ENCODE measurements at regions of chr17 and their contacts with region 1.

Region 1: GRCh38 chr17:57084802-57085447 is at the start of gene AKAP1:
- DNase-seq: peak; percentile 87 to 99 (median 94)
- ATAC-seq: peak; percentile 88
- H3K4me3 ChIP-seq: peak within 1 kb of the TSS; percentile 89
- H3K4me3 Mint-ChIP-seq: peak within 1 kb of the TSS; percentile 95
- H3K27ac ChIP-seq: peak within 1 kb of the TSS; percentile 84 to 85
- H3K27ac Mint-ChIP-seq: peak within 1 kb of the TSS; percentile 89
- H3K4me1 ChIP-seq: peaks cover 20% of the 10 kb centered on the region
- H3K4me1 Mint-ChIP-seq: peaks cover 36% of the 10 kb centered on the region
- H3K27me3 ChIP-seq: no peaks in the 10 kb centered on the region
- H3K27me3 Mint-ChIP-seq: no peaks in the 10 kb centered on the region
- CTCF ChIP-seq: no peak
- total RNA-seq, gene AKAP1: 20.3 to 23.1 TPM

Region 2: GRCh38 chr17:56833809-56834379 is 251.0 kb before region 1 on chr17 and contains the starts of genes C17orf67 and DGKE:
- CTCF ChIA-PET with region 1: interaction called, 3 read pairs
- POLR2A ChIA-PET with region 1: interaction called, 24 read pairs
- intact Hi-C with region 1: loop called (anchors 1 to 2 kb)
- DNase-seq: peak; percentile 97 to 100 (median 99)
- ATAC-seq: peak; percentile 87
- H3K4me3 ChIP-seq: peak within 1 kb of the TSS; percentile 96
- H3K4me3 Mint-ChIP-seq: peak within 1 kb of the TSS; percentile 99
- H3K27ac ChIP-seq: peak within 1 kb of the TSS; percentile 58 to 83
- H3K27ac Mint-ChIP-seq: peak within 1 kb of the TSS; percentile 95
- H3K4me1 ChIP-seq: peaks cover 41% of the 10 kb centered on the region
- H3K4me1 Mint-ChIP-seq: peaks cover 67% of the 10 kb centered on the region
- H3K27me3 ChIP-seq: no peaks in the 10 kb centered on the region
- H3K27me3 Mint-ChIP-seq: no peaks in the 10 kb centered on the region
- CTCF ChIP-seq: no peak
- total RNA-seq, gene C17orf67: 4.3 to 4.8 TPM
- total RNA-seq, gene DGKE: 20.0 to 22.3 TPM

Region 3: GRCh38 chr17:56977673-56978395 is 107.1 kb before region 1 on chr17 and contains the start of gene SCPEP1:
- CTCF ChIA-PET with region 1: interaction called, 7 read pairs
- POLR2A ChIA-PET with region 1: interaction called, 11 read pairs
- intact Hi-C with region 1: loop called in 1 of 2 experiments (anchors 2 kb)
- DNase-seq: peak; percentile 63 to 92 (median 80)
- ATAC-seq: peak; percentile 96
- H3K4me3 ChIP-seq: peak within 1 kb of the TSS; percentile 72
- H3K4me3 Mint-ChIP-seq: peak within 1 kb of the TSS; percentile 92
- H3K27ac ChIP-seq: no peak within 1 kb of the TSS
- H3K27ac Mint-ChIP-seq: peak within 1 kb of the TSS; percentile 73
- H3K4me1 ChIP-seq: peaks cover 17% of the 10 kb centered on the region
- H3K4me1 Mint-ChIP-seq: peaks cover 13% of the 10 kb centered on the region
- H3K27me3 ChIP-seq: no peaks in the 10 kb centered on the region
- H3K27me3 Mint-ChIP-seq: peaks cover 8% of the 10 kb centered on the region
- CTCF ChIP-seq: no peak
- total RNA-seq, gene SCPEP1: 22.1 to 25.5 TPM

Region 4: DNA sequence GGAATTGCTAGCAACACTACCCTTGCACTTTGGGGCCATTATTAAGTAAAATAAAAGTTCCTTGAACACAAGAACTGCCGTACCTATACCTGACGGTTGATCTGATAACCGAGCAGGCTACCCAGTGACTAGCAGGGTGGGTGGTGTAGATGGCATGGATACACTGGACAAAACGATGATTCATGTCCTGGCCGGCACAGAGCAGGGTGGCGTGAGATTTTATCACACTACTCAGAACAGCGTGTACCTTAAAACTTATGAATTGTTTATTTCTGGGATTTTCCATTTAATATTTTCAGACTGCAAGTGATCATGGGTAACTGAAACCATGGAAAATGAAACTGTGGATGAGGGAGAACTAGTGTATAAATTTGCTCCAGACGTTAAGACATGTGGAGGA is 130.4 kb after region 1 on chr17:
- CTCF ChIA-PET with region 1: no interaction called
- POLR2A ChIA-PET with region 1: no interaction called
- intact Hi-C with region 1: no loop called
- DNase-seq: no peak
- ATAC-seq: no peak
- H3K4me3 ChIP-seq: no peak overlapping the region
- H3K4me3 Mint-ChIP-seq: no peak overlapping the region
- H3K27ac ChIP-seq: no peak overlapping the region
- H3K27ac Mint-ChIP-seq: no peak overlapping the region
- H3K4me1 ChIP-seq: no peaks in the 10 kb centered on the region
- H3K4me1 Mint-ChIP-seq: no peaks in the 10 kb centered on the region
- H3K27me3 ChIP-seq: peaks cover 6 to 10% of the 10 kb centered on the region in 2 experiments
- H3K27me3 Mint-ChIP-seq: peaks cover 27% of the 10 kb centered on the region
- CTCF ChIP-seq: no peak

Region 5: GRCh38 chr17:58082870-58083490 is 998.1 kb after region 1 on chr17 and contains the start of gene DYNLL2:
- CTCF ChIA-PET with region 1: no interaction called
- POLR2A ChIA-PET with region 1: interaction called, 3 read pairs
- intact Hi-C with region 1: loop called in 1 of 2 experiments (anchors 5 kb)
- DNase-seq: peak; percentile 81 to 94 (median 90)
- ATAC-seq: peak; percentile 78
- H3K4me3 ChIP-seq: peak within 1 kb of the TSS; percentile 71
- H3K4me3 Mint-ChIP-seq: peak within 1 kb of the TSS; percentile 91
- H3K27ac ChIP-seq: peak within 1 kb of the TSS; percentile 63 to 69
- H3K27ac Mint-ChIP-seq: peak within 1 kb of the TSS; percentile 89
- H3K4me1 ChIP-seq: peaks cover 38% of the 10 kb centered on the region
- H3K4me1 Mint-ChIP-seq: peaks cover 36% of the 10 kb centered on the region
- H3K27me3 ChIP-seq: no peaks in the 10 kb centered on the region
- H3K27me3 Mint-ChIP-seq: no peaks in the 10 kb centered on the region
- CTCF ChIP-seq: no peak
- total RNA-seq, gene DYNLL2: 30.9 to 32.2 TPM